ENCODE measurements at regions of chr4 and their contacts with region 1.

Region 1: GRCh38 chr4:152850377-152850776 is 70.6 kb downstream of the ARFIP1 start:
- DNase-seq: peak; percentile 77
- ATAC-seq: peak; percentile 84
- H3K4me3 ChIP-seq: peak overlapping the region in 4 of 5 experiments; percentile 7 to 45 (median 19)
- H3K4me3 Mint-ChIP-seq: peak overlapping the region; percentile 63
- H3K27ac ChIP-seq: peak overlapping the region; percentile 46 to 86
- H3K27ac Mint-ChIP-seq: peak overlapping the region; percentile 39
- H3K4me1 ChIP-seq: peaks cover 21 to 23% of the 10 kb centered on the region in 2 donors
- H3K4me1 Mint-ChIP-seq: peaks cover 26% of the 10 kb centered on the region
- H3K27me3 ChIP-seq: no peaks in the 10 kb centered on the region
- H3K27me3 Mint-ChIP-seq: no peaks in the 10 kb centered on the region
- CTCF ChIP-seq: no peak

Region 2: DNA sequence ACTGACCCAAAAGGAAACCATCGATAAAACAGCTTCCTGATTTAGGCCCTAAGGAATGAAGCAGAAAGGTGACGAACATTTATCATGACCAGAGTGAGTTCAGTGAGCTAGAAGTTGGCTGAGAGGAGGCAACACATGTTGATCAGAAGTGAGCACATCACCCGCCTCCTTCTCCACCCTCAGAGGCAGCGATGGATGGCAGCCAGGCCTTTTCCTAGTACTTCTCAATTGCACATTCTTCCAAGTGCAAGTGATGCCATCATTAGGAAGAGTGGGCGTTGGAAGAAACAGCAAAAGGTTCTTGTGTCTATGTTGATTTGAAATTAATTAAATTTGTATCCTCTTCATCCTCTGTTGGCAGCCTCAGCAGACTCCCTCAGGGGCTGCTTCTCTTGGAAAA is 222.2 kb before region 1 on chr4:
- CTCF ChIA-PET with region 1: no interaction called
- POLR2A ChIA-PET with region 1: no interaction called
- intact Hi-C with region 1: no loop called
- DNase-seq: no peak
- ATAC-seq: no peak
- H3K4me3 ChIP-seq: no peak overlapping the region
- H3K4me3 Mint-ChIP-seq: no peak overlapping the region
- H3K27ac ChIP-seq: peak overlapping the region in 1 of 2 donors; percentile 26
- H3K27ac Mint-ChIP-seq: peak overlapping the region; percentile 37
- H3K4me1 ChIP-seq: no peaks in the 10 kb centered on the region
- H3K4me1 Mint-ChIP-seq: no peaks in the 10 kb centered on the region
- H3K27me3 ChIP-seq: no peaks in the 10 kb centered on the region
- H3K27me3 Mint-ChIP-seq: no peaks in the 10 kb centered on the region
- CTCF ChIP-seq: no peak

Region 3: DNA sequence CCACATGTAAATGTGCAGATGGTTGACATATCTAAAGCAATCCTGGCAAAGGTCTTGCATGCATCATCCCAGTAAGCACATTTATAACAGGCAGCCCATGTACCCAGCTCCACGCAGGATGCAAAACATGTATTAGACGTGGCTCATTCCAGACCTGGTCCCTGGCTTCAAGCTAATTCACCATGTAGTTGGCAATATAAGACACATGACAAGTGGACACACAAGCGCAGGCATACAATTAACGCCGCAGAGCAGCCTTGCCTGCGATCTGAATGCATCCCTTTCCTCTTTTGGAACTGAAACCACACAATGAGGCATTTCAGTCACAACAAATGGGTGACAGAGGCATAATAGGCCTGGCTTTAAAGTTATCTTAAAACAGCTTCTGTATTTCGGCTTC is 239.4 kb after region 1 on chr4:
- CTCF ChIA-PET with region 1: interaction called, 167 read pairs
- POLR2A ChIA-PET with region 1: no interaction called
- intact Hi-C with region 1: loop called (anchors 1 kb)
- DNase-seq: no peak
- ATAC-seq: no peak
- H3K4me3 ChIP-seq: no peak overlapping the region
- H3K4me3 Mint-ChIP-seq: no peak overlapping the region
- H3K27ac ChIP-seq: no peak overlapping the region
- H3K27ac Mint-ChIP-seq: no peak overlapping the region
- H3K4me1 ChIP-seq: peaks cover 3 to 8% of the 10 kb centered on the region in 2 donors
- H3K4me1 Mint-ChIP-seq: peaks cover 6% of the 10 kb centered on the region
- H3K27me3 ChIP-seq: no peaks in the 10 kb centered on the region
- H3K27me3 Mint-ChIP-seq: peaks cover 3% of the 10 kb centered on the region
- CTCF ChIP-seq: no peak

Region 4: GRCh38 chr4:153318696-153319320 is 468.4 kb after region 1 on chr4:
- CTCF ChIA-PET with region 1: interaction called, 3 read pairs
- POLR2A ChIA-PET with region 1: no interaction called
- intact Hi-C with region 1: loop called (anchors 1 kb)
- DNase-seq: peak; percentile 57
- ATAC-seq: no peak
- H3K4me3 ChIP-seq: no peak overlapping the region
- H3K4me3 Mint-ChIP-seq: no peak overlapping the region
- H3K27ac ChIP-seq: no peak overlapping the region
- H3K27ac Mint-ChIP-seq: no peak overlapping the region
- H3K4me1 ChIP-seq: no peaks in the 10 kb centered on the region
- H3K4me1 Mint-ChIP-seq: no peaks in the 10 kb centered on the region
- H3K27me3 ChIP-seq: no peaks in the 10 kb centered on the region
- H3K27me3 Mint-ChIP-seq: no peaks in the 10 kb centered on the region
- CTCF ChIP-seq: peak; percentile 78

Region 5: GRCh38 chr4:153643406-153644383 is 793.3 kb after region 1 on chr4:
- CTCF ChIA-PET with region 1: interaction called, 4 read pairs
- POLR2A ChIA-PET with region 1: no interaction called
- intact Hi-C with region 1: loop called (anchors 2 kb)
- DNase-seq: peak; percentile 80
- ATAC-seq: peak; percentile 96
- H3K4me3 ChIP-seq: no peak overlapping the region
- H3K4me3 Mint-ChIP-seq: no peak overlapping the region
- H3K27ac ChIP-seq: no peak overlapping the region
- H3K27ac Mint-ChIP-seq: no peak overlapping the region
- H3K4me1 ChIP-seq: no peaks in the 10 kb centered on the region
- H3K4me1 Mint-ChIP-seq: peaks cover 8% of the 10 kb centered on the region
- H3K27me3 ChIP-seq: no peaks in the 10 kb centered on the region
- H3K27me3 Mint-ChIP-seq: no peaks in the 10 kb centered on the region
- CTCF ChIP-seq: peak; percentile 81

Region 6: DNA sequence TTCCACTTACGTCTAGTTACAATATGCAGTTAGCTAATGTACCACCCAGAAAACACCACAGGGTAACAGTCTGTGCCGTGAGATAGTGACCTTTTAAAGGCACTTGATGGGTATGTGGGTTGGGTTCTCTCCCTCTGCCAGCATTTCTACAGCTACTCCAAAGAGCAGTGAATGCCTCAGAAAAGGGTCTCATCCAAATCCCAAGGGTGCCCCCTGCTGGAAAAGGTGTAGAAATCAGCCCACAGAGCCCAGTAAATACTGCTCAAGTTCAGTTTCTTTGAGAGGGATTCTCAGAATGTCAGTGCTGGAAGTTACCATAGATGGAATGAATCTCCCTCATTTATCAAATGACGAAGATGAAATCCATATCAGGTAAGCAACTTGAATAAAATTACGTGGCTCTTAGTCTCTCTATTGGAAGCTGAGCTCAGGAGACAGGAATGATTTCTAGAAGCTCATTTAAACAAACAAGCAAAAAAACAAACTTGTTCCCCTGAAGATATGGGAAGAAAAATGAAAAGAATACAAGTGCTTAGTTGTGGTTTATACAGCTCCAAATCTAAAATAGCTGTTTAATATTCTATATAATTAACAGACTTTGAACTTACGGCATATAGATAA is 899.9 kb after region 1 on chr4:
- CTCF ChIA-PET with region 1: interaction called, 4 read pairs
- POLR2A ChIA-PET with region 1: no interaction called
- intact Hi-C with region 1: loop called (anchors 2 kb)
- DNase-seq: peak; percentile 75
- ATAC-seq: peak; percentile 68
- H3K4me3 ChIP-seq: no peak overlapping the region
- H3K4me3 Mint-ChIP-seq: no peak overlapping the region
- H3K27ac ChIP-seq: no peak overlapping the region
- H3K27ac Mint-ChIP-seq: no peak overlapping the region
- H3K4me1 ChIP-seq: peaks cover 0 to 10% of the 10 kb centered on the region in 2 donors
- H3K4me1 Mint-ChIP-seq: no peaks in the 10 kb centered on the region
- H3K27me3 ChIP-seq: peaks cover 0 to 10% (median 3%) of the 10 kb centered on the region in 4 experiments
- H3K27me3 Mint-ChIP-seq: peaks cover 9% of the 10 kb centered on the region
- CTCF ChIP-seq: peak; percentile 87

Measured in B cell (primary cell).